Kidney (tissue), 22 donors: ENCODE measurements at regions of chr5 and their contacts with region 1.

Region 1: DNA sequence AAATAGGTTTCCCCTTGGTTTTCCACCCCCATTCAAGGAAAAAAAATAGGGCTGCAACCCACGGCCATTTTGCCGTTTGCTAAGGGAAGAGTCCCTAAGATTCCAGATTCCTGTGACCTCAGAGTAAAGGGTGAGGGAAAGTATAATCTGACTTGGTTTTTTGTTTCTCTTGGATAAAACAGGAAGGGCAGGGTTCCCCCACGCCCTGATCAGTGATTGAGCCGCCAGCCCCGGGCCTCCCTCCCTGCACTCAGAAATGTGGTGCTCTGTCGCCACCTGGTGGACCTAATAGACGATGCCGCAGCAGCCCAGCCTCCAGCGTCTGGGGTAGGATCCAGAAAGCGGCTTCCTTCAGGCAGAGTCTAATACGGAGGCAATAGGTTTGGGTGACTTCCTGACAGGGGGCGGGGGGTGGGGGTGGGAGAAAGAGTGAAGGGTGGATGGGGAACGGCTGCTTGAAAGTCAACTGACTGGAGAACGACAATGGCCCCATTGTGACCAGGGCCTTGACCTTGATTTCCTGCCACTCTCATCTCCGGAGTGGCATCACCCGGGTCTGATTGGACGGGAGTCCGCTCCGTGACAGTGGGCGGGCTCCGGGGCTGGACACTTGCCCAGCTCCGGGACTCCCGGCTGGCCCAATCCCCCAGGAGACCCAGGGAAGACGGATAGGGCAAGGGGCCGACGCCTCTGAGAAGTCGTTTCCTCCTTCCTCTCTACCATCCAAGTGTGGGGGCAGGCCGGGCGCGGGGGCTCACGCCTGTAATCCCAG is 17.8 kb upstream of the CYSTM1 start:
- DNase-seq: peak; percentile 91 to 96 (median 92)
- H3K4me3 ChIP-seq: peak overlapping the region; percentile 13 to 58 (median 41)
- H3K27ac ChIP-seq: no peak overlapping the region
- H3K4me1 ChIP-seq: peaks cover 0 to 8% (median 2%) of the 10 kb centered on the region in 3 donors
- H3K27me3 ChIP-seq: peaks cover 3% of the 10 kb centered on the region
- CTCF ChIP-seq: peak; percentile 99

Region 2: GRCh38 chr5:140073296-140073695 is 83.9 kb before region 1 on chr5:
- intact Hi-C with region 1: loop called (anchors 5 kb)
- DNase-seq: peak in 2 of 5 donors; percentile 16 to 17
- H3K4me3 ChIP-seq: peak overlapping the region in 1 of 3 donors; percentile 8
- H3K27ac ChIP-seq: no peak overlapping the region
- H3K4me1 ChIP-seq: no peaks in the 10 kb centered on the region
- H3K27me3 ChIP-seq: no peaks in the 10 kb centered on the region
- CTCF ChIP-seq: peak; percentile 46

Region 3: DNA sequence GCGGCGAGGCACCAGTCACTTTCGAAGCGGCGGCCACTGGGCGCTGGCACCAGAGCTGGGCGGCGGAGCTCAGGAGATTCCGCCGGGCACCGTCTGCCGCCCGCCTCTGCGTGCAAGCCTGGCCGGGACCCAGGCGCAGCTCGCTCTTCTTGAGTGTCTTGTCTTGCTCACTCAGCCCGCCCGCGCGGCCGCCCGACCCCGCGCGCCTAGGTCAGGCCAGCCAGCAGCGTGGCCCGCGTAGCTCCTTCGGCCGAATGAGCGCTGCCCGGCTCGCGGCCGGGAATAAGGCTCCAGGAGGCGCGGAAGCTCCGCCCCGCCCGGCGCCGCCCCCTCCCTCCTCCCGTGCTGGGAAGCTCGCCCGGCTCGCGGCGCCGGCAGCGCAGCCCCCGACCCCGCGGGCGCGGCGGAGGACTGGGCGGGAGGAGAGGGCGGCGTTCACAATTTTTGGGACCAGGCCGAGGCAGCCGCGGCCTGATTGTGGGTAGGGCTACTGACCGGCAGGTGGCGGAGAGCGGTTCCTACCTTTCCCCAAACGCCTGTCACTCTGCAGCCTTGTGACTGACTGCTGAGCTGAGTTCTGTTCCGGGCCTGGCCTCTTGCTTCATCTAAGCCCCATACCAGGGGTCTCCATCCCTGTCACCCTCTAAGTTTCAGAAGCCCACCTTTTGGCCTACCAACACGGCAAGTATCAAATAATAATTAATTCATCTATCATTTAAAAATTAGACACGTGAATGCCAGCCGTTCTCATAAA is 189.3 kb after region 1 on chr5 and contains the start of gene HBEGF:
- intact Hi-C with region 1: no loop called
- DNase-seq: peak; percentile 85 to 94 (median 86)
- H3K4me3 ChIP-seq: peak within 1 kb of the TSS; percentile 61 to 69 (median 65)
- H3K27ac ChIP-seq: peak within 1 kb of the TSS; percentile 66 to 69
- H3K4me1 ChIP-seq: peaks cover 5 to 20% (median 6%) of the 10 kb centered on the region in 3 donors
- H3K27me3 ChIP-seq: no peaks in the 10 kb centered on the region
- CTCF ChIP-seq: peak; percentile 39
- total RNA-seq, gene HBEGF: 7.8 TPM